Activated CD4-positive, alpha-beta T cell treated with anti-CD3 and anti-CD28 coated beads for 36 hours (primary cell): ENCODE measurements at regions of chr1 and their contacts with region 1.

Region 1: DNA sequence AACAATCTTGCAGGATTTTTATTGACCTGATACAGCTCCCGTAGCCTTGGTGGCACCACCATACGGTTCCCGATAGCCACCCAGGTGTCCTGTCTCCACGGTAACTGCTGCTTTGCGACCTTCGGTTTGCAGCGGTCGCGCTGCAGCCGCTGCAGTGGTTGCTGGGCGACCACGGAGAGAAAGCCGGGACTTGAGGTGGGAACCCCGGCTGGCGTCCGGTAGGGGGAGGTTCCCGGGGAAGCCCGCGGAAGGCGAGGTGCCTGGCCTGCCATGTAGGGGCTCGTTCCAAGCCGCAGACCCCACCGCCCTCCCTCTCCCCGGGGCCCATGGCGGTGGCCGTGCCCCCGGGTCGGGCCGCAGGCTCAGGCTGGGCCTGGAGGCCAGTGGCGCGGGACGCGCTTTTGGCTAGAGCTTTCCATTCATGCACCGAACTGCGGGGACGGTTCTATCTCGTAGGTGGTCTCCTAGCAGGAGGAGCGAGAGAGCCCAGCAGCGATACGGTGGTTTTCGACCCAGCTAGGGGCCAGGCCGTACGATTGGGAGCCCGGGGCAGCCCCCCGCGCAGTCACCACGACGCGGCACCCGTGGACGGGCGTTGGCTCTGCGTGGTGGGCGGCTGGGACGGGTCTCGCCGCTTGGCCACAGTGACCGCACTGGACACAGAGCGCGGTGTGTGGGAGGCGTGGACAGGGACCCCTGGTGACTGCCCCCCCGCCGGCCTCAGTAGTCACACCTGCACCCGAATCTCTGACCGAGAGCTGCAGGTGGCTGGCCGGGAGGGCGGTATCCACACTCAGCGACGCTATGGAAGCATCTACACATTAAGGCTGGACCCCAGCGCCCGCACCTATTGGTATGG is at the start of gene KLHDC9:
- DNase-seq: peak; percentile 84
- ATAC-seq: peak; percentile 82
- H3K4me3 Mint-ChIP-seq: peak within 1 kb of the TSS; percentile 71
- H3K27ac Mint-ChIP-seq: peak within 1 kb of the TSS; percentile 73
- H3K4me1 Mint-ChIP-seq: peaks cover 34% of the 10 kb centered on the region
- H3K27me3 Mint-ChIP-seq: no peaks in the 10 kb centered on the region
- total RNA-seq, gene KLHDC9: 0.39 to 0.50 TPM

Region 2: GRCh38 chr1:160244209-160244608 is 854.2 kb before region 1 on chr1:
- CTCF ChIA-PET with region 1: no interaction called
- POLR2A ChIA-PET with region 1: no interaction called
- intact Hi-C with region 1: no loop called
- DNase-seq: no peak
- ATAC-seq: no peak
- H3K4me3 Mint-ChIP-seq: no peak overlapping the region
- H3K27ac Mint-ChIP-seq: no peak overlapping the region
- H3K4me1 Mint-ChIP-seq: peaks cover 8% of the 10 kb centered on the region
- H3K27me3 Mint-ChIP-seq: no peaks in the 10 kb centered on the region

Region 3: GRCh38 chr1:160366731-160367515 is 731.5 kb before region 1 on chr1 and contains the start of gene NHLH1:
- CTCF ChIA-PET with region 1: no interaction called
- POLR2A ChIA-PET with region 1: no interaction called
- intact Hi-C with region 1: no loop called
- DNase-seq: no peak
- ATAC-seq: no peak
- H3K4me3 Mint-ChIP-seq: no peak within 1 kb of the TSS
- H3K27ac Mint-ChIP-seq: no peak within 1 kb of the TSS
- H3K4me1 Mint-ChIP-seq: no peaks in the 10 kb centered on the region
- H3K27me3 Mint-ChIP-seq: no peaks in the 10 kb centered on the region
- total RNA-seq, gene NHLH1: 0.32 to 0.42 TPM

Region 4: DNA sequence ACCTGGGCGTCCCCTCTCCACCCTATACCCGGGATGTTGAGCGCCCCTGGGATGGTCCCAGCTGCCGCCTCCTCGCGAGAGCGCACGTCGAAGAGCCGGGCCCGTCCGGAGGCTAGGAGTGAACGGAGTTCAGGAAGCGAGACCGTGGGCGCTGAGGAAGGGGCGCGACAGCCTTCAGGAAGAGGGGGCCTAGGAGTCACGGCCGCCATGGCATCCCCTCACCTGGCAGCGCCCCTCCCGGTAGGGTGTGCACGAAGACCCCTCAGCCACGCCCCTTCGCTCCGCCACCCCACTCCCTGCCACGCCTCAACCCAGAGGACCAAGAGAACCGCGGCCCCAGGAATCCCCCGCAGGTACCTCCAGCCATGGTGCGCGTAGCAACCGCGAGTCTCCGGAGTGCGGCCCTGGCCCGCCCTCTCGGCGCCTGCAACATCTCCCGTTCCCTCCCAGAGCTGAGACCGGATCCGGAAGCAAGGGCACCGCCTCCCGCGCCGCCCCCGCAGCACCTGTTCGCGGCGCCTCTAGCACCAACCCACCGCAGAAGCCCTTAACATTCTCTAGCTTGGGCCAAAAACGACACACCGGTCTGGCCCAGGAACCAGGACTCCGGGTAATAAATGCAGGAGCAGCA is 59.8 kb before region 1 on chr1 and contains the start of gene TSTD1:
- CTCF ChIA-PET with region 1: interaction called, 40 read pairs
- POLR2A ChIA-PET with region 1: interaction called, 3 read pairs
- intact Hi-C with region 1: loop called (anchors 1 kb)
- DNase-seq: peak; percentile 95
- ATAC-seq: peak; percentile 90
- H3K4me3 Mint-ChIP-seq: peak within 1 kb of the TSS; percentile 86
- H3K27ac Mint-ChIP-seq: peak within 1 kb of the TSS; percentile 91
- H3K4me1 Mint-ChIP-seq: peaks cover 34% of the 10 kb centered on the region
- H3K27me3 Mint-ChIP-seq: no peaks in the 10 kb centered on the region
- total RNA-seq, gene TSTD1: 26.0 to 42.8 TPM

Region 5: DNA sequence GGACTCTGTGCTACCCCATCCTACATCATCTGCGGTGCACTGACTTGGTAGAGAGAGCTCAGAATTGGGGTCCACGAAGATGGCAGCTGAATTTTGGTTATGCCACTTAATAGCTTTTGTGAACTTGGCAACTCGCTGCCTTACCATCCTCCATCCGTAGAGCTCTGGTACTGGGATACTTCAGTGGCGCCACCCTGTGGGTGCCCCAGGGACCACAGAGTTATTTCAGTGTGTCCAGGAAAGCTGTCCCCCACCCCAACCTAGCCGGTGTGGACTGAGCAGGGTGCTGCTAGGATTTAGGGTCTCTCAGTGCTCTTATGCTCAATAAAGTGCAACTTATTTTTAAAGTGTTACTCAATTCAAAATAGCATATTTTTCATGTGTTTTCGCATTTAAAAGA is 43.6 kb before region 1 on chr1:
- CTCF ChIA-PET with region 1: interaction called, 15 read pairs
- POLR2A ChIA-PET with region 1: no interaction called
- intact Hi-C with region 1: no loop called
- DNase-seq: peak; percentile 42
- ATAC-seq: peak; percentile 57
- H3K4me3 Mint-ChIP-seq: no peak overlapping the region
- H3K27ac Mint-ChIP-seq: no peak overlapping the region
- H3K4me1 Mint-ChIP-seq: peaks cover 20% of the 10 kb centered on the region
- H3K27me3 Mint-ChIP-seq: no peaks in the 10 kb centered on the region

Region 6: DNA sequence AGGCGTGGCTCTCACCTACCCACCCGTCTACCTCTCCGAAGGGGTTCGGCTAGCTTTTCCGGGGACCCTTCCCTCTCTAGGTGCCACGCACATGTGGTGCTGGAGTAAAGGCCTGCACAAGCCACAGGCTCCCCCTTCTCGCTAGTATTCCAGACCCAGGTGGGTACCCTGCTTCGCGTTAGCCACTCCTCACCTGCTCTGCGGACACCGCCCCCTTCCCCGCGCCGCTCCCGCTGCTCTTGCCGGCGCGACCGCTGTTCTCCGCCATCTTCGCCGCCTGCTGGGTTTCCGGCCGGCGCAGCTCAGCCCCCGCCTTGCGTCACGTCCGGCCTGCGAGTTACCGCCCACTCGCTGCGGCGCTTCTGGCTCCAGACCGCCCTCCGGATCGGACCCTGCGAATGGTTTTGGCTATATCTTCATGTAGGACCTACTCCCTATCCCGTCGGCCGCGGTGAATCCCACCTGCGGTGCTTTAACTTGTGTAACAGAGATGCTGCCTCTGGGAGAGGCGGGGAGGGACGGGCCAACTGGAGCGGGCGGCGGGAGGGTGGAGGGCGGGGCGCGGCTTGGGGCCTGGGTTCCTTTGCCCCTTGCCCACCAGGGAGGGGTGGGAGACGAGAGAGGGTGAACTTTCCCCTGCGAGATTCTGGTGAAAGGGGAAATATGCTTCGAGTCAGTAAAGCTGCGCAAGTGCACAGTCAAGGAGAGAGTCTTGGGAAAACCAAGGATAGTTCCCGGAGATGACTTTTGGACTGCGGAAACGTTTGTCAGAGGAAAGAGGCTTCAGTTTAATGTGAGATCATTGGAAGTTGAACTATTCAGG is 19.5 kb after region 1 on chr1 and contains the starts of genes NIT1 and PFDN2:
- CTCF ChIA-PET with region 1: interaction called, 32 read pairs
- POLR2A ChIA-PET with region 1: interaction called, 3 read pairs
- intact Hi-C with region 1: no loop called
- DNase-seq: peak; percentile 94
- ATAC-seq: peak; percentile 53
- H3K4me3 Mint-ChIP-seq: peak within 1 kb of the TSS; percentile 94
- H3K27ac Mint-ChIP-seq: peak within 1 kb of the TSS; percentile 98
- H3K4me1 Mint-ChIP-seq: peaks cover 75% of the 10 kb centered on the region
- H3K27me3 Mint-ChIP-seq: no peaks in the 10 kb centered on the region
- total RNA-seq, gene NIT1: 58.2 to 62.1 TPM
- total RNA-seq, gene PFDN2: 108 to 136 TPM

Region 7: DNA sequence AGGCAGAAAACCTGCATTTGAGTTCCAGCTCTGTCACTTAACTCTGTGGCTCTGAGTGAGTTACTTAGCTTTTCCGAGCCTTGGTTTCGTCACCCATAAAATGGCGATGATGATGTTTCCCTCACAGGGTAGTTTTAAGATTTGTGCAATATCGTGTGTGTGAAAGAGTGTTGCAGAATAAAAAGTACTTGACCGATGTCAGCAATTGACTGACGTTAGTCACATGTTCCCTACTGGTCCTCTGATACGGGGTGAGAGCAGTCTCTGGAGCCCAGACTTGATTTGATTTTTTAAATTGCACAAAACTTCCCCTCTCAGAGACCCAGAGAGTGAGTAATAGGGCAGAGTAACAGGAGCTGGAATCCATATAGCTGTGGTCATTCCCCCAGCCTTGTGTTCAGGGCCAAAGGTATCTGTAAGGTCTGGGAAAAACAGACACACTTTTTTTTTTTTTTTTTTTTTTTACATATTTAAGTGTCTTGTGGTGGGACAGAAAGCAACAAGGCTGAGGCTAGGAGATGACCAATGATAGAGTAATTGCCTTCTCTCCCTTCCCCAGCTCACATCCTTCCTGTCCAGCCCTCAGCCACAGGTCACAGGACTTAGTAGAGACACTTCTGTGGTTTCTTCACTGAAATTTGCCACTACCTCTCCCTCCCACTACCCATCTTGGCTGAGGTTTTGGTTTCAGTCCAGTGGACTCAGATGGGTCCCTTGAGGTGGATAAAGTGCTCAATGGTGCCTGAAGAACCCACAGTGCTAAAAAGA is 118.7 kb after region 1 on chr1:
- CTCF ChIA-PET with region 1: no interaction called
- POLR2A ChIA-PET with region 1: no interaction called
- intact Hi-C with region 1: no loop called
- DNase-seq: no peak
- ATAC-seq: peak; percentile 59
- H3K4me3 Mint-ChIP-seq: no peak overlapping the region
- H3K27ac Mint-ChIP-seq: peak overlapping the region; percentile 22
- H3K4me1 Mint-ChIP-seq: peaks cover 45% of the 10 kb centered on the region
- H3K27me3 Mint-ChIP-seq: no peaks in the 10 kb centered on the region

Region 8: GRCh38 chr1:161399257-161399998 is 301.0 kb after region 1 on chr1:
- CTCF ChIA-PET with region 1: no interaction called
- POLR2A ChIA-PET with region 1: no interaction called
- intact Hi-C with region 1: no loop called
- DNase-seq: peak; percentile 92
- ATAC-seq: peak; percentile 83
- H3K4me3 Mint-ChIP-seq: peak overlapping the region; percentile 89
- H3K27ac Mint-ChIP-seq: peak overlapping the region; percentile 100
- H3K4me1 Mint-ChIP-seq: peaks cover 34% of the 10 kb centered on the region
- H3K27me3 Mint-ChIP-seq: peaks cover 9% of the 10 kb centered on the region